Transverse colon (tissue), 4 donors: ENCODE measurements at regions of chr4 and their contacts with region 1.

Region 1: DNA sequence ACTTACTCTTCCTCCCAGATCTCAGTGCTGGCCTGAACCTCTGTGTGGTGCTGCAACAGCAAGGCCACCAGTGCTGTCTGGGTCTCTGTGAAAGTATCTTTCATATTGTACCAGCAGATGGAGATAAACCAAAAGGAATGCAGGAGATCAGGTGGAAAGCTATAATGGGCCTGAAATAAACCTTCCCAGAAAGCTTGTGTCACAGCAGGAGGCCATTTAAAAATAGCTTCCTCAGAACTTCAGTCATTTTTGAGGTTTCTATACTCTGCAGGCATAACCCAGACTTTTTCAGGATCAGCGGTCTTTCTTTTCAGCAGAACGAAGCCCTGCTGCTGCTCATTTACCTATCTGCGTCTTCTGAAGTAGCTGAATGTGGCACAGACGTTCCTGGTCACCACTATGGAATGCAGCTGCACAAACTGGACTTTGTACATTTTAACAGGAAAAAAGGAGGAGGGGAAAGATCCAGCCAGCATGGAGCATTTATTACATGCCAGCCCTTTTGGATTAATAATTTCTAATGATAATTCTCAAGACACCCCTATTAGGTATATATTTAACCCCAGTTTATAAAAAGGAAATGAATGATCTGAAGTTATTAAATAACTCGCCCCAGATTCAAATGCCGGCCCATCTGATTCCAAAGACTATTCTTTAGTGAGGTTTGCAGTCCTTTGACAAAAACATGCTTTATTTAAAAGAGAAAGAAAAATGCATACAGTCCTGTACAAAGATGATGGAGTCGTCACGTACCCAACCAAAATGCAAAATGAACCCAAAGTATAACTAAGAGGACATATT is 119.7 kb downstream of the NFKB1 start:
- DNase-seq: peak; percentile 47
- H3K4me3 ChIP-seq: peak overlapping the region in 2 of 4 donors; percentile 13 to 32
- H3K27ac ChIP-seq: peak overlapping the region; percentile 53 to 75 (median 72)
- H3K4me1 ChIP-seq: peaks cover 0 to 17% (median 5%) of the 10 kb centered on the region in 4 donors
- H3K27me3 ChIP-seq: no peaks in the 10 kb centered on the region
- CTCF ChIP-seq: peak; percentile 36 to 84 (median 48)
- EP300 ChIP-seq: no peak
- POLR2A ChIP-seq: no peak

Region 2: DNA sequence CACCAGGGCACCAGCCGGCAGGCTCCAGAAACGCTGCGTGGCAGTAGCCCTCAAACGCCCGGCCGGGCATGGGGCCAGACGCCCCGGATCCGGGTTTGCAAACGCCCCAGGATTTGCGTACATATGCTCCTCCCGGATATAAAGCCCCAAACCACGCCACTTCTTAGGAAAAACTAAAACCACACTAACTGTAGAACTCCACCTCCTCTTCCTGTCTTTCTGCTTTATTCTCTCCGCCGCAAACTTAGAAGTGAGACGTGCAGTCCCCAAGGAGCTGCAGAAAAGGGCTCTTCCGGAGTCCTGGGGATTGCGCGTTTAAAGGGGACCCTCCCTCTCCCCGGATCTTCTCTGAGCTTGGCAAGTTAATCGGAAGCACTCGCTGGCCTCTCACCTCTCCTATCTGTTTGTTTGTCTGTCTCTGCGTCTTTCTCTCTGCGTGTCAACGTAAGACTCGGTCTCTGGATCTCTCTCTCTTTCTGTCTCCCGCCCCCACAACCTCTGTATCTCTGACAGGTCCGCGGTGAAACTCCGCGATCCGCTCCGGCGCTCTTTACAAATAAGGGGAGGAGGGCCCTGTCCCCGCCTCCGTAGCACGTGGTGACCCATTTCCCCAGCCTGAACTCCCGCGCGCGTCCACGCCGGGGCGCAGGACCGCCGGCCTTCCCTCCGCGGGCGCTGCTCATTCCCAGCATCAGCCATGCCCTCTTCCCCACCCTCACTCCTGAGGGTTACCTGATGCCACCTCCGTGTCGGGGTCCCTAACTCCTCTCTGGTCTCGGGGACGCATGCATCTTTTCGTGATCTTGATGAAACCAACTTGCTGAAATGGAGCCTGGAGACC is 275.7 kb before region 1 on chr4 and contains the start of gene SLC39A8:
- in situ Hi-C with region 1: loop called in 1 of 4 experiments (anchors 25 kb)
- intact Hi-C with region 1: no loop called
- DNase-seq: peak; percentile 93
- H3K4me3 ChIP-seq: peak within 1 kb of the TSS; percentile 56 to 76 (median 70)
- H3K27ac ChIP-seq: peak within 1 kb of the TSS; percentile 85 to 93 (median 88)
- H3K4me1 ChIP-seq: peaks cover 3 to 43% (median 19%) of the 10 kb centered on the region in 4 donors
- H3K27me3 ChIP-seq: no peaks in the 10 kb centered on the region
- CTCF ChIP-seq: peak; percentile 81 to 94 (median 85)
- EP300 ChIP-seq: no peak
- POLR2A ChIP-seq: peak; percentile 85
- total RNA-seq, gene SLC39A8: 21.7 to 83.8 (median 42.6) TPM

Region 3: DNA sequence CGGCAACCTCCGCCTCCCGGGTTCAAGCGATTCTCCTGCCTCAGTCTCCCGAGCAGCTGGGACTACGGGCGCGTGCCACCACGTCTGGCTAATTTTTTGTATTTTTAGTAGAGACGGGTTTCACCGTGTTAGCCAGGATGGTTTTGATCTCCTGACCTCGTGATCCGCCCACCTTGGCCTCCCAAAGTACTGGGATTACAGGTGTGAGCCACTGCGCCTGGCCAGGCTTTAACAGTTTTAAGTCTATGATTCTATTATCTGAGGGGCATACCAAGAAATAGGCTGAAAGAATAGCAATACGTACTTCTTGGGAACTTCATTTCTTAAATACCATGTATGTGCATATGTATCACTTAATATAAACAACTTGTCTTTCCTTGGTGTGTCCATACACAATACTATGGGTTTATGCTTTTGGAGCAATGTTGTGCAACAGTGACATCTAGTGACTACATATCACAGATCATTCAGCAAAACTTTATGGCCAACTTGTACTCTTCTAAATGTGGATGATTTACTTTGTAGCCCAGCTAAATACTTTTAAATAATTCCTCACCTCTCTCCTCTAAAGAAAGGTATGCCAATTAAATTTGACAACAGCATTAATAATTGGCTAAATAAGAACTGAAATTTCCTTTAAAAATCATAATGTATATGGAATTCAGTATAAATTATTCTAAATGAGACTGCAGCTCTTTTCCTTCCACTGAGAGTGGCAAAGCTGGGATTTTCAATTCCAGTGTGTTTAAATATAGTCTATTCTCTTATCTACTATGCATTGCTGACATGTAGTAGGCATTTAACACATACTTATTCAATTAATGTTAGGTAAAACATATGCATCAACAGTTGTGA is 388.2 kb after region 1 on chr4:
- in situ Hi-C with region 1: loop called (anchors 5 to 10 kb)
- intact Hi-C with region 1: loop called (anchors 10 kb)
- DNase-seq: no peak
- H3K4me3 ChIP-seq: no peak overlapping the region
- H3K27ac ChIP-seq: no peak overlapping the region
- H3K4me1 ChIP-seq: peaks cover 5 to 24% (median 19%) of the 10 kb centered on the region in 4 donors
- H3K27me3 ChIP-seq: no peaks in the 10 kb centered on the region
- CTCF ChIP-seq: peak; percentile 57 to 66 (median 64)
- EP300 ChIP-seq: no peak
- POLR2A ChIP-seq: no peak

Region 4: GRCh38 chr4:103019308-103020124 is 398.6 kb after region 1 on chr4 and contains the start of gene SLC9B1:
- in situ Hi-C with region 1: loop called in 1 of 4 experiments (anchors 10 kb)
- intact Hi-C with region 1: no loop called
- DNase-seq: peak; percentile 98
- H3K4me3 ChIP-seq: peak within 1 kb of the TSS; percentile 9 to 55 (median 32)
- H3K27ac ChIP-seq: peak within 1 kb of the TSS; percentile 89 to 93 (median 90)
- H3K4me1 ChIP-seq: peaks cover 3 to 13% (median 7%) of the 10 kb centered on the region in 4 donors
- H3K27me3 ChIP-seq: no peaks in the 10 kb centered on the region
- CTCF ChIP-seq: peak in 2 of 5 experiments; percentile 2 to 24
- EP300 ChIP-seq: peak; percentile 66
- POLR2A ChIP-seq: peak; percentile 88
- total RNA-seq, gene SLC9B1: 0.41 to 0.79 TPM in 2 of 4 donors, not detected in the others

Region 5: GRCh38 chr4:103089481-103089880 is 468.6 kb after region 1 on chr4:
- in situ Hi-C with region 1: loop called in 1 of 4 experiments (anchors 10 kb)
- intact Hi-C with region 1: loop called (anchors 10 kb)
- DNase-seq: no peak
- H3K4me3 ChIP-seq: no peak overlapping the region
- H3K27ac ChIP-seq: no peak overlapping the region
- H3K4me1 ChIP-seq: peaks cover 0 to 4% (median 0%) of the 10 kb centered on the region in 4 donors
- H3K27me3 ChIP-seq: no peaks in the 10 kb centered on the region
- CTCF ChIP-seq: no peak
- EP300 ChIP-seq: no peak
- POLR2A ChIP-seq: no peak

Region 6: GRCh38 chr4:103099691-103100392 is 478.9 kb after region 1 on chr4 and contains the start of gene BDH2:
- in situ Hi-C with region 1: no loop called
- intact Hi-C with region 1: loop called (anchors 10 kb)
- DNase-seq: peak; percentile 48
- H3K4me3 ChIP-seq: peak within 1 kb of the TSS; percentile 36 to 59 (median 48)
- H3K27ac ChIP-seq: peak within 1 kb of the TSS; percentile 63 to 84 (median 73)
- H3K4me1 ChIP-seq: peaks cover 6 to 25% (median 14%) of the 10 kb centered on the region in 4 donors
- H3K27me3 ChIP-seq: no peaks in the 10 kb centered on the region
- CTCF ChIP-seq: peak; percentile 73 to 88 (median 78)
- EP300 ChIP-seq: no peak
- POLR2A ChIP-seq: peak; percentile 39
- total RNA-seq, gene BDH2: 13.8 to 54.0 (median 31.9) TPM